ENCODE measurements at regions of chr3 and their contacts with region 1.

Region 1: DNA sequence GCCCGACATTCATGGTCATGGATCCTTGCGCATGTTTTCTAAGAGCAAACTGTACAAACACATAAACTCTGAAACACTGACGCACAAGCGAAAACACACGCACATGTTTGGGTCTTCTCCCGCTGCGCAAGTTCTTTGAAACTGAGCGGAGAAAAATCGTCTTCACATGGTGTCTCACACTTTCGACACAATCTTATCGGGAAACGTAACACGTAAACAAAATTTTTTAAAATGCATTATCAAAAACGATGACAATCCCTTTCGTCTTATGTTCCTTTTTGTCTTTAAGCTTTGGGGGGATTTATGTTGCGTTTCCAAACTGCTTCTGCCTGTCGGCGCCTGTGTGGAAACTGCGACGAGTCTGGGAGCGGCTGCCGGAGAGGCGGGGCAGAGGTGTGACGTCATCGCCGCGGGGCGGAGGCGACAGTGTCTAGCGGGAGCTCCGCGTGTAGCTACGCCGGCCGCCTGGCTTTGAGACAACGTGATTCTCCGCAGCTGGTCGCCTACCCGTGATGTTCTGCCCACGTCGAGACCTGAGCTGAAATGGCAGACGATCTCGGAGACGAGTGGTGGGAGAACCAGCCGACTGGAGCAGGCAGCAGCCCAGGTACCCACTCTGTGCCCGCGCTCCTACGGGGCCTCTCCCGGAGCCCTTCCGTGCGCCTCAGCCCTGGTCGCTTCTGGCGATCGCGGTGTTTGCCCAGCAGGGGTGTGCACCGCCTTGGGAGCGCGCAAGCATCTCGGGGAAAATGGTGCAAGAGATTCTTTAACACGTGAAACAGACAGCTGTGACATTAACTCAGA is at the start of gene CMSS1:
- DNase-seq: peak; percentile 96 to 98 (median 96)
- H3K4me3 ChIP-seq: peak within 1 kb of the TSS; percentile 59 to 73
- H3K4me3 Mint-ChIP-seq: peak within 1 kb of the TSS; percentile 93 to 98 (median 96)
- H3K27ac ChIP-seq: peak within 1 kb of the TSS; percentile 80
- H3K27ac Mint-ChIP-seq: peak within 1 kb of the TSS; percentile 99 to 100 (median 100)
- H3K4me1 ChIP-seq: peaks cover 20% of the 10 kb centered on the region
- H3K4me1 Mint-ChIP-seq: peaks cover 25 to 40% (median 34%) of the 10 kb centered on the region in 4 donors
- H3K27me3 ChIP-seq: no peaks in the 10 kb centered on the region
- H3K27me3 Mint-ChIP-seq: no peaks in the 10 kb centered on the region
- total RNA-seq, gene CMSS1: 18.3 to 20.5 TPM

Region 2: DNA sequence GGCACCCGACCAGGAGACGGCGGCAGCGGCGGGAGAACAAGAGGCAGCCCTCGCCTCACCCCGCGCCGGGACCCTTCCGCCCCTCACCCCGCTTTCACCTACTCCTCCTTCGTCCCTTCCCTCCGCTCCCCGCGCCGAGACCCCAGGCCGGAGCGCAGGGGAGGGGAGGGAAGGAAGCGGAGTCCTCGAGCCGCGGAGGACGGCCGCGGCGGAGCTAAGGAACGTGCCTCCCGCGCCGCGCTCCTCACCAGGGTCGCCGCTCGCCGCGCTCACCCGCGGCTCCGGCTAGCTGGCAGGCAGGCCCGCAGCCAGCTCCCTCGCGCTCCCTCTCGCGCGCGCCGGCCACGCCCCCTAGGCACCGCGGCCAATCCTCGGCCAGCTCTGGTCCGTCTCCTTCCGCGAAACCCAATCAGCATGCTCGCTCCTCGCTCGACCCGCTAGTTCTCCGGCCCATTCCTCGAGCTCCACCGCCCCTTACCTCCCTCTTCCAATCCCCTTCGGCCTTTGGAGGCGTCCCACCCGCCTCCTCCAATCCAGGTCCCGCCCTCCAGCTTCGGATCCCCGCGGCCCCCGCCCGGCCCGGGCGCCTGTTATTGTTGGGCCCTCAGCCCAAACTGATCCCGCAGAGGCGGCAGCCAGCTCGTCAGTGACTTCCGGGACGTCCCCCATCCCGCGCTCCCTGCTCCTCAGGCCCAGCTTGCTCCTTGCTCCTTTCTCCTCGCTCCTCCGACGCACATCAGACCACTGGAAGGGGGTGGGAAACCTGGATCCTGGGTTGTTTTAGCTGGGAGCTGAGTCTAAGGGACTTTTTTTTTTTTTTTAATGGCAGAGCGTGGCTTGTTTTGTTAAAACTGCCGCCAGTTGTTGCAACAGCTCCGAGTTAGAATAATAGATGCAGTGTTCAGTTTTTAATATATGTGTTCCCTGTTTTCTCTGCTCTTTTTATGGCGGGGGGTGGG is 916.0 kb before region 1 on chr3 and contains the start of gene DCBLD2:
- CTCF ChIA-PET with region 1: no interaction called
- POLR2A ChIA-PET with region 1: no interaction called
- intact Hi-C with region 1: loop called (anchors 2 kb)
- DNase-seq: peak; percentile 88 to 94 (median 91)
- H3K4me3 ChIP-seq: peak within 1 kb of the TSS; percentile 53 to 75
- H3K4me3 Mint-ChIP-seq: peak within 1 kb of the TSS; percentile 87 to 96 (median 93)
- H3K27ac ChIP-seq: peak within 1 kb of the TSS; percentile 12
- H3K27ac Mint-ChIP-seq: peak within 1 kb of the TSS; percentile 64 to 92 (median 82)
- H3K4me1 ChIP-seq: peaks cover 8% of the 10 kb centered on the region
- H3K4me1 Mint-ChIP-seq: peaks cover 8 to 28% (median 12%) of the 10 kb centered on the region in 4 donors
- H3K27me3 ChIP-seq: peaks cover 8% of the 10 kb centered on the region
- H3K27me3 Mint-ChIP-seq: peaks cover 4 to 25% of the 10 kb centered on the region in 2 donors
- total RNA-seq, gene DCBLD2: 1.7 to 2.5 TPM

Region 3: DNA sequence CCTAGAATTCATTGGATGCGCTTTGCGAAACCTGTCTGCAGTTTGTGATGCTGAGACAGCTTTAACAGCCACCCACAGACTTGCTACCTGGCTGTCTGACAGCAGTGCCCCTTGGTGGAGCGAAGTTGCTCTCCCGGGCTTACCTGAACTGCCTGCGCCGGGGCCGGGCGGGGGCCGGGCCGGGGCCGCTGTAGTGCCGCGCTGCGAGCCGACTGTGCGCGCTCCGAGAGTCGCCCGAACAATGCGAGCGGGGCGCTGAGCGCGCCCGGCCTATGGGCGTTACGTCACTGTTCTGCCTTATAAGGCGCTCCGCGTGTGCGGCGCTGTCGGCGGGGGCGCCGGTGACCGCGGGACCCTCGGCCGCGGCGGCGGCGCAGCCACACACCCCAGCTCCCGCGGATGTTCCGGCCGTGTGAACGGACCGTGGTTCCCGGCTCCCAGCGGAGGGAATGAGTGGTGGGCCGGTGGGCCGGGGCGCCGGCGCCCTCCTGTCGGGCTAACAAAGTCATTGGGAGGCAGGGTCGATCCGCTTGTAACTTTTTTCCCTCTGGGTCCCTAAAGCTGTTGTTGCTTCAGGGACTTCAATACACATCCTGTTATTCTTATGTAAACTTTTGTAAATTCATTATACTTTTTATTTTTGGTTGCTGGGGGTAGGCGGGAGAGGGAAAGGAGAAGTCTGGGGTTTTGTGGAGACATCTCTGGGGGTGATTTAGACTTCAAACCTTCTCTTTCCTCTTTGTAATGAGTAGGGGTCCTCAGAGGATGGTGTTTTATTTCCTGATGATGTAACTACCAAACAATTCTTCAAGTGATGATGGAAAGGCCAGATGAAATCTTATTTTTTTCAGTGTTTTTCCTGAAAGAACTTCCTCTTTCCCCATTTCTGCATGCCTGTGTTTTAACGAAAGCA is 58.5 kb after region 1 on chr3:
- CTCF ChIA-PET with region 1: no interaction called
- POLR2A ChIA-PET with region 1: no interaction called
- intact Hi-C with region 1: loop called (anchors 5 kb)
- DNase-seq: peak; percentile 66 to 74 (median 68)
- H3K4me3 ChIP-seq: peak overlapping the region; percentile 51 to 71
- H3K4me3 Mint-ChIP-seq: peak overlapping the region; percentile 72 to 85 (median 82)
- H3K27ac ChIP-seq: peak overlapping the region; percentile 45
- H3K27ac Mint-ChIP-seq: peak overlapping the region; percentile 15 to 88 (median 83)
- H3K4me1 ChIP-seq: peaks cover 17% of the 10 kb centered on the region
- H3K4me1 Mint-ChIP-seq: peaks cover 8 to 27% (median 9%) of the 10 kb centered on the region in 4 donors
- H3K27me3 ChIP-seq: no peaks in the 10 kb centered on the region
- H3K27me3 Mint-ChIP-seq: no peaks in the 10 kb centered on the region